ENCODE measurements at regions of chr11 and their contacts with region 1.

Region 1: DNA sequence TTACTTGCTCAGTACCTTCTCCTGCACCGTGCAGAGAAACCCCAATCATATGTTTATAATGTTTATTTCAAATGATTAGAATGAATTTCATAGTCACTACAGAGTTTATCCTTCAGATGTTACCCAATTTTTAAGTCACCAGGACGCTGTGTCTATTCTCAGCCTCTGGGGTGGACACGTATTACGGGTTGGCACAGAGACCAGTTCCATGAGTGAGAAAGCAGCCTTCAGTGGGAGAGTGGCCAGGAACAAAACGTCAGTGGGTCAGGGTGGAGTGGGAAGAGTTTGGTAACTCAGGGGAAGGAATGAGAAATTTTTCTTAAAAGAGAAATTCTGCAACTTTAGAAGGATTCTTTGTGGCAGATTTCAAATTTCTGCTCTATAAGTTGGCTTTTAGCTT is 77.1 kb upstream of the MTMR2 start:
- DNase-seq: peak; percentile 82
- ATAC-seq: peak; percentile 99

Region 2: DNA sequence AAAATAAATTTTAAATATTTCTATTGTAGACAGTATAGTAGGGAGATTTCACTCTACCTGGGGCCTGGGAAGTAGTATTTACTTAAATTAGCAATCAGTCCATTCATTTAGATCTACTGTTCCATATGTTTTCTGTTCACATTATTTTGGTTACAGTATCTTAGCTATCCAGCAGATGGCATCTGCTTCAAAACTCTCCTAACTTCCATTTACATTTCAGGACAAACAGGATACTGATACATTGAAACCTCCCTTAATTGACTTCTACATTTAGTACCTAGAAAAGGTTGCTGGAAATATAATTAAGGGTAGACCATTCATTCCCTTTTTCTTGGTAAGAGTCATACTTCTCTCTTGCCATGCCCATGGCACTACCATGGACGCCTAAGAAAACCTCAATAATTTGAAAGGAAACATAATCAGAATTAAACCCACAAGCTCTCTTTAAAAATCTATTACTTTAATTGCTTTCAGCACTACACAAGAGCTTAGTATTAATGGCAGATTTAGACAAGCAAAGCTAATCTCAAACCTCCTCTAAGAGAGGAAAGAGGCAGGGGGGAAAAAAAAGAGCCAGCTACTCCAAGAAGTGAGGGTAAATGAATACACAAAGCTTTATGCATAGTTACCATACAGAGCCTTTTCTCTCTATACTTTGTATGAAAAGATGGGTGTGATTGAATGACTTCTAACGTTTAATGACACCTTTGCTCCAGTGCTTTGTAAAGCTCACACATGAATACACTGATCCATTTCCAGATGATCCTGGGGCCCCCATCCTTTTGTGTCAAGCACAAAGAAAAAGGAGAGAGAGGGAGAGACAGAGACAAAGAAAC is 54.1 kb after region 1 on chr11:
- intact Hi-C with region 1: loop called (anchors 5 kb)
- DNase-seq: no peak
- ATAC-seq: no peak

Region 3: GRCh38 chr11:96155627-96156378 is 154.8 kb after region 1 on chr11:
- intact Hi-C with region 1: no loop called
- DNase-seq: peak; percentile 74
- ATAC-seq: peak; percentile 79

Measured in Right ventricle myocardium inferior (tissue), 1 donor.